RWPE1 (cell line): ENCODE measurements at regions of chr5 and their contacts with region 1.

Region 1: DNA sequence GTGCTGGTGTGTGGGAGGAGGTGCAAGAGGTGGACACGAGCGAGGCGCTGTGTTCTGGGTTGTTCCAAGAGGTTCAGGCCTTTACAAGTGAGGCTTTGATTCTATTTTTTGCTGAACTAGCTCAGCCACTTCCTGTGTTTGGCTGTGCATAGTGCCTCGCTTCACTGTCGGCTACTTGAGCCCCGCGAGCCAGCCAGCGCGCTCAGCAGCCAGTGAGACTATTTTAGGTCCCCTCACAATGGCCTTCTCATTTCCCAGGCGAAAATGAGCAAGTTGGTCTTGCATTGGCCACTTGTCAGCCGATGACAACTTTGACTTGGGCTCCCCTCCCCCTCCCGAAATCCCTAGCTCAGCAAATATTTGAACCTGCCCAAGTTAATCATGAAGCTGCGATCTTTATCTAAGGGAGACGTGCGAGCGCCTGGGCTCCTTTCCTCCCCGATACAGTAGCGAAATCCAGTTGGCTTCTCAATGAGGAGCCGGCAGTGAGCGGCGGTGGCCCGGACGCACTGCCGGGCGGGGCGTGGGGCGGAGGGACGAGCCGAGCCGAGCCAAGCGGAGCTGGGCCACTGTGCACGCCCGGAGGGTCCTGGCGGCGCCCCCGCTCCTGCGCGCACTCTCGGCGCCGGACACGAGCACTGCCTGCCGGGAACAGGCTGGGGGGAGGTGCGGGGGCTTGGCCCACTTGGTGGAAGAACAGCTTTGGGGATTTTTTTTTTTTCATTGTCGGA is 72.6 kb downstream of the PIK3R1 start:
- DNase-seq: peak; percentile 48
- H3K27ac ChIP-seq: peak overlapping the region; percentile 85
- CTCF ChIP-seq: no peak

Region 2: GRCh38 chr5:68141494-68141893 is 146.6 kb before region 1 on chr5:
- CTCF ChIA-PET with region 1: no interaction called
- POLR2A ChIA-PET with region 1: no interaction called
- DNase-seq: no peak
- H3K27ac ChIP-seq: no peak overlapping the region
- CTCF ChIP-seq: no peak

Region 3: GRCh38 chr5:68460147-68460798 is 172.1 kb after region 1 on chr5:
- CTCF ChIA-PET with region 1: interaction called, 18 read pairs
- POLR2A ChIA-PET with region 1: no interaction called
- DNase-seq: peak; percentile 55
- H3K27ac ChIP-seq: no peak overlapping the region
- CTCF ChIP-seq: no peak; the same call in 1 of the 2 replicates

Region 4: DNA sequence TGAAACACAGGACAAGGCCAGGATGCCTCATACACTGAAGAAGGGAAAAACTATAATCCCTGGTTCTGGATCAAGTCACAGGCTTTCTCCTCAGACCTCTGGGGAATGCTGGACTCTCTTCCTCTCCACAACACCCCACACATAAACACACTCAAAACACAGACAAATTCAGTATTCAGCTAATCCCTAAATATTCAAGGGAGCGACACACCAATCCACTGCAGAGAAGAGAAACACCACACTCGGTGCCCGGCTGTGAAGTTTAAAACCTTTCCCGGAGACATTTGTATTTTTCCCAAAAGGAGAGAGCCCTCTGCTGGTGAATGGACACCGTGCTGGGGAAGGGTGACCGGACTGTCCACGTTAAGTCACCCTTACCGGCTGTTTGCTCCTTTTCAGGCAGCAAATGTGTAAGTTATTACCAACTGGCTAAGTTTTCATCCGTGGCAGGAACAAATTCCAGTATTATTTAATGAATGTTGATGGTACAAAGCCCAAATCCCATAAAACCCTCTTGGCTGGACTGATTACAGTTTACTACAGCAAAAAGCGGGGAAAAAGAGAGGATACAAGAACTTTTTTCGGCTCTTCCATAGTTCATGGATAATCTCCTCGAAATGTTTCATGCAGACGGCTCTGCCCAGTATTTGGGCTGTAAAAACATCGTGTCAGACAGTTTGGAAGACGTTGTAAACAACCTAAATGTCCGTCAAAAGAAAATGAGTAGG is 674.8 kb after region 1 on chr5:
- CTCF ChIA-PET with region 1: interaction called, 10 read pairs
- POLR2A ChIA-PET with region 1: no interaction called
- DNase-seq: peak; percentile 85
- H3K27ac ChIP-seq: no peak overlapping the region
- CTCF ChIP-seq: peak; percentile 95